Right ventricle myocardium inferior (tissue), 1 donor: ENCODE measurements at regions of chr6 and their contacts with region 1.

Region 1: DNA sequence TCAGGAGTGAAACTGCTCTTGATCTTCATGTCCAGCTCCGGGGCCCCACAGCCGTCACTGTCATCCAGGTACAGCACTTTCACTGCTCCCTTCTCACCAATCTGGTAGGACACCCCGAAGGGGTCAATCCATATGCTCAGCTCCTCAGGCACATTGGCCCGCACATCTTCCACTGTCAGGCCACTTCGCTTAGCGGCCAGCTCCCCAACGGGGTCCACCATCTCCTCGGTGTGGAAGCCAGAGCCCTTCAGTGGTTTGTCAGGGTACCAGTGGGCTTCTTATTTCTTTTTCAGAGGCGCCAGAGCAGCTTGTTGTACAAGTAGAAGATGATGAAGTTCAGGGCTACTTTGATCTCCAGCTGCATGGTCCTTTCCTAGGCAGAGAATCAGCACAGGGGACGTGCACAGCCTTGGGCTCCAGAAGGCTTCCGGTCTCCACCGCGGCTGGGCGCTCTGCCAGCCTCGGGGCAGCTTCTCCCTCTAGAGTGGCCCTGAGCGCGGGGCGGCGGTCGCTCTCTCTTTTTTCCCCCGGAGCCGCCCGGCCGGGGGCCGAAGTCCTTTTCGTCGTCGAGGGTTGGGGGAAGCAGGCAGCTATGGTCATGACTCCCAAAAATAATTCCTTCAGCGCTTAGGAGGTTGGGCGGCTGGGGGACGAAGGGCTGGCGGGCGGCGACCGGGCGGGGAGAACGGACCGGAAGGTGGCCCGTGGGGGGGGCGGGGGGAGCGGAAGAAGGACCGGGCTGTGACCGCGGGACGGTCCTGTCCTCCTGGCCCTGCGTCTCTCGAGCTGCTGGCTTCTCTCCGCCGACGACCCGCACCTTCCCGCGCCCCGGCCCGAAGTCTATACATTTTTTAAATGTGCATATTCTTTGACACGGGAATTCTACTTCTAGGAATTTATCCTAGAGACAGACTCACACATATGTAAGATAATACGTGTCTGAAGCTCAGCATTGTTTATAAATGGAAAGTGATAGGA is 6.5 kb upstream of the ZSCAN9 start:
- DNase-seq: peak; percentile 92
- ATAC-seq: peak; percentile 95

Region 2: DNA sequence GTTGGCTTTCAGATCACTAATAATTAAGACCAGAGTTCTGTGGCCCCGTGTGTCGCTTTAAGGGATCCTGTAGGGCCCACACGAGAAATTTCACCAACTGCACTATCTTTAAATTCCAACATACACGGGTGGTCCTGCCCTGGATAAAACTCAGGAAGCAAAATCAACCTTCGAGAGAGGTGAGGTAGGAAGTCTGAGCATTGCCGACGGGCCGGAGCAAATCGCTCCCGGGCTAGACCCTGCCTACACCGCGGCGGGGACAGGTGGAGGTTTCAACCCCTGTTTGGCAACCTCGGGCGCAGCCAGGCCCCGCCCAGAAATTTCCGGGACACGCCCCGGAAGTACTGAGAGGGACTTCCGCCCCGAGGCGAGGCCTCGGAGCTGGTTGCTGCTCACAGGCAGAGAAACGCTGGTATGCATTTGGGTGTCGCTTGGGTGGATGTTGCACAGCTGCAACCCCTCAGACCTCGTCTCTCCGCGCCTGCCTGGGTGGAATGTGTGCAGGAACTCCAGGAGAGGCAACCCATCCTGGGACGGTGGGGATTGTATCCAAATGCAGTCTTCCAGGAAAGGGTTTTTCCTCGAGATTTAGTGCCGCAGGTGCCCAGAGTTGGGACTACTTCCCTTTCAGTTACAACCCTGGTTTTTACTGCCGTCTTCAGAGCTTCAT is 57.0 kb before region 1 on chr6:
- intact Hi-C with region 1: loop called (anchors 5 kb)
- DNase-seq: peak; percentile 82
- ATAC-seq: peak; percentile 92